Posterior vena cava (tissue), 2 donors: ENCODE measurements at regions of chr17 and their contacts with region 1.

Region 1: DNA sequence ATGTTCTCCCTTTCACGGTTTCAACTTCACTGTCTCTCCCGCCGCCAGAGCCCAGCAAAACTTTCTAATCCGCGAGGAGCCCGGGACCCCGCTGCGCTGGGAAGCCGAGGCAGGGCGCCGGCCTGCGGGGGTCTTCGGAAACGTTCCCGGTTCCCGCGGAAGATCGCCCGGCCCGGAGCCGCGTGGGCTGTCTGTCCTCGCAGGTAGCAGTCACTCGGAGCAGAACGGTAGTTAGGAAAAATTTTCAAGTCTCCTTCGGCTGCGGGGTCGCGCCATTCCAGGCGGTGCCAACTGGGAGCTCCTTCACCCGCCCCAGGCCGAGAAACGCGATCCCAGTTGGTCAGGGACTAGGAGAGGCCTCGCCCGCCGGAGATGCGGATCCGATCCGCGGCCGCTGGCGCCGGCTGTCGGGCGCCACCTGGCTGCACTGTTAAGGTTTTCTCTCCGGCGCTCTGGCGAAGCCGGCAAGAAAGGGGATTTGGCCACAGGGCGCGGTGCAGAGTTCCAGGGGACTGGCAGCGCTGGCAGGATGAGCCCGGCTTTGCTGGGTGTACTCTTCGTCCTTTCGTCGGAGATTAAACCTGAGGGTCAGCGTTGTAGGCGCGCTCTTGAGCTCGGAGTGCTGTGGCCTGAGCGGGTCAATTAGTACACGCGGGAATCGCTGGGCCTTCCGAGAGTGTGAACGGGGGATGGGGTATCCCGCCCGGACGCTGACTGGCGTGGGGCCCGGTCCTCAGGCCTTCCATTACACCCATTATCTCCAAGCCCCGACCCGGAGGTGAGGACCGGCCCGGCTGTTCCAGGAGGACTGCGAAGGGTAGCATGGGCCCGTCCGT is 135.4 kb downstream of the KCNJ12 start:
- DNase-seq: peak; percentile 95

Region 2: GRCh38 chr17:21263351-21263750 is 248.2 kb before region 1 on chr17:
- intact Hi-C with region 1: loop called in 1 of 2 experiments (anchors 5 kb)
- DNase-seq: no peak

Region 3: GRCh38 chr17:21457051-21458026 is 54.2 kb before region 1 on chr17:
- intact Hi-C with region 1: loop called (anchors 5 to 10 kb)
- DNase-seq: peak; percentile 97

Region 4: DNA sequence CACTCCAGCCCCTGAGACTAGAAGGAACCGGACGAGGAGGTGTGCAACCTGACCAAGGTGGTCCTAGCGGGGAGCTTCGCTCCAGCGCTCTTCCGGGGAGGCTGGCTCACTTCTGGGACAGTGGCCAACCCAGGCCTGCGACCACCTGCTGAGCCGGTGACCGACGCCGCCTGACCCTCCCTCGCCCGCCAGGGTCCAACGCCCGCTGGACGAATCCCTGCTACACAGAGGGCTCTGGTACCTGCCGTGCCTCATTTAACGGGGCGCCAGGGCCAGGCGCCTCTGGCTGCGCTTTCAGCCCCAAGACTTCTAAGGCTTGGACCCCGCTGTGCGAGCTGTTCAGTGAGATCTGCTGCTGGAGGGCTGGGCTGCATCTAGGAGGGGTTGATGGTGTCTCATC is 81.2 kb after region 1 on chr17:
- intact Hi-C with region 1: no loop called
- DNase-seq: no peak